Posterior vena cava (tissue), 2 donors: ENCODE measurements at regions of chr13 and their contacts with region 1.

Region 1: DNA sequence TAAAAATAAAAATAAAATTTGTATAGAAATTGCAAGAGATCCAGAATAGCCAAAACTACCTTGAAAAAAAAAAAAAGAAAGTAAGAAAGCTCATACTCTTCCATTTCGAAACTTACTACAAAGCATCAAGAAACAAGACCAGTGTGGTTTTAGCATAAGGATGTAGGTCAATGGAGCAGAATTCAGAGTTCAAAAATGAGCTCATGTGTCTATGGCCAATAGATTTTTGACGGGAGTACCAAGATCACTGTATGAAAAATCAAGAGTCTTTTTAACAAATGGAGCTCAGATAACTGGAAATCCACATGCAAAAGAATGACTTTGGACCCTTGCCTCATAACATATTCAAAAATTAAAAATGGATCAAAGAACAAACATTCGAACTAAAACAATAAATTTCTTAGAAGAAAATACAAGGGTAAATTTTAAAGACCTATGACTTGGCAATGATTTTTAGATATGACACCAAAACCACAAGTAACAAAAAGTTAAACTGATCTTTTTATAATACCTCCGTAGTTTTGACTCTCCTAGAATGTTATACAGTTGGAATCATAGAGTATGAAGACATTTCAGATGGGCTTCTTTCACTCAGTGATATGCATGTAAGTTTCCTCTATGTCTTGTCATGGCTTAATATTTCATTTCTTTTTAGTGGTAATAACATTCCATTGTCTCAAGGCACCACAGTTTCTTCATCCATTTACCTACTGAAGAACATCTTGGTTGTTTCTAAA is 43.2 kb downstream of the KLF12 start:
- DNase-seq: no peak

Region 2: GRCh38 chr13:74210693-74211393 is 119.8 kb after region 1 on chr13:
- intact Hi-C with region 1: no loop called
- DNase-seq: no peak

Region 3: GRCh38 chr13:74706801-74707200 is 615.8 kb after region 1 on chr13:
- intact Hi-C with region 1: loop called in 1 of 2 experiments (anchors 5 kb)
- DNase-seq: no peak